CD4-positive, alpha-beta T cell (primary cell): ENCODE measurements at regions of chr4 and their contacts with region 1.

Region 1: DNA sequence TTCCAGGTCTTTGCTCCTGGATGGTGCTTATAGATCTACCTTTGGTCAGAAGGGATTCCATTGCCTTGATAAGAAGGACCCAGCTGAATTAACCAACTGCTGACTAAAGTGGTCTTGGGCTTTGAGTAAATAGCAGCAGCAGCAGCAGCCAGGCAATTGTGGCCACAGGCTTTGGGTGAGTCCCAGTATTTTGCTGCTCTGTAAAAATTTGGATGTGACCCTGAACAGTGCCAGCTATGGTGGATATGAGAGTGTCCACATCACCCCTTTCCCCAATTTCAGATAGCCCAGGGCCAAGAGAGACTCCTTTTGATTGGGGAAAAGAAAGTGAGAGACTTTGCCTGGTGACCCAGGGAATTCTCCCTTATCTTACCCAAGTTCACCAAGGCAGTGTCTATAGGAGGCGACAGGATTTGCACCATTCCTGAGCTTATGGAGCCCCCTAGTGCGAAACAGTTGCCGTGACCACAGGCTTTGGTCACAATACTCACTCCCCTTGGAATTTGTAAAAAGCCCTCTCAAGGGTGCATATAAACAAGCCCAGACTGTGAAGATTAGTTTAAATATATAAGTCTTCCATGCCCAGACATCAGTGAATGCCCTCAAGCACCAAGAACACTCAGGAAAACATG is 518.0 kb downstream of the TMA16 start:
- DNase-seq: peak in 12 of 14 experiments; percentile 2 to 64 (median 14)
- ATAC-seq: peak; percentile 64
- H3K4me3 ChIP-seq: no peak overlapping the region
- H3K4me3 Mint-ChIP-seq: no peak overlapping the region
- H3K27ac ChIP-seq: no peak overlapping the region
- H3K27ac Mint-ChIP-seq: no peak overlapping the region
- H3K4me1 ChIP-seq: no peaks in the 10 kb centered on the region
- H3K4me1 Mint-ChIP-seq: peaks cover 21% of the 10 kb centered on the region
- H3K27me3 ChIP-seq: no peaks in the 10 kb centered on the region
- H3K27me3 Mint-ChIP-seq: no peaks in the 10 kb centered on the region
- CTCF ChIP-seq: peak; percentile 62

Region 2: GRCh38 chr4:162497564-162498167 is 1514.8 kb before region 1 on chr4:
- CTCF ChIA-PET with region 1: no interaction called
- POLR2A ChIA-PET with region 1: no interaction called
- intact Hi-C with region 1: loop called in 1 of 2 experiments (anchors 10 kb)
- DNase-seq: peak in 3 of 14 experiments; percentile 38 to 54 (median 52)
- ATAC-seq: peak; percentile 52
- H3K4me3 ChIP-seq: no peak overlapping the region
- H3K4me3 Mint-ChIP-seq: no peak overlapping the region
- H3K27ac ChIP-seq: no peak overlapping the region
- H3K27ac Mint-ChIP-seq: no peak overlapping the region
- H3K4me1 ChIP-seq: no peaks in the 10 kb centered on the region
- H3K4me1 Mint-ChIP-seq: no peaks in the 10 kb centered on the region
- H3K27me3 ChIP-seq: no peaks in the 10 kb centered on the region
- H3K27me3 Mint-ChIP-seq: peaks cover 10% of the 10 kb centered on the region
- CTCF ChIP-seq: peak; percentile 72

Region 3: GRCh38 chr4:163484906-163485305 is 527.6 kb before region 1 on chr4:
- CTCF ChIA-PET with region 1: no interaction called
- POLR2A ChIA-PET with region 1: no interaction called
- intact Hi-C with region 1: loop called (anchors 2 to 5 kb)
- DNase-seq: peak; percentile 14 to 77 (median 39)
- ATAC-seq: peak; percentile 60
- H3K4me3 ChIP-seq: no peak overlapping the region
- H3K4me3 Mint-ChIP-seq: no peak overlapping the region
- H3K27ac ChIP-seq: no peak overlapping the region
- H3K27ac Mint-ChIP-seq: no peak overlapping the region
- H3K4me1 ChIP-seq: no peaks in the 10 kb centered on the region
- H3K4me1 Mint-ChIP-seq: no peaks in the 10 kb centered on the region
- H3K27me3 ChIP-seq: no peaks in the 10 kb centered on the region
- H3K27me3 Mint-ChIP-seq: peaks cover 11% of the 10 kb centered on the region
- CTCF ChIP-seq: peak; percentile 71

Region 4: DNA sequence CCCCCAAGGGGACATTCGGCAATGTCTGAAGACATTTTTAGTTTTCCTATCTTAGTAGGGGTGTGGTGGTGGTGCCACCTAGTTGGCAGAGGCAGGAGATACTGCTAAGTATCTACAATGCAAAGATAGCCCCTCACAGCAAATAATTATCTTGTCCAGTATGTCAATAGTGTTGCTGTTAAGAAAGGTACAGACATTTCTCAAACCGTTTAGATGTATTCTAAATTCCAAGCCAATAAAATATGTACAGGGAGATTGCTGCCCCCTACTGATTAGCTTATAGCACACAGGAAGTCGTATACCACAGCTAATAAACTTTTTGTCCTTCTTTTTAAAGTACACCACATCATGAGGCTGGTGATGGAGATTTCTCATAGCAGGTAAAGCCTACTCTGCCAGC is 257.5 kb before region 1 on chr4:
- CTCF ChIA-PET with region 1: no interaction called
- POLR2A ChIA-PET with region 1: no interaction called
- intact Hi-C with region 1: loop called (anchors 10 kb)
- DNase-seq: peak in 3 of 14 experiments; percentile 51 to 57 (median 52)
- ATAC-seq: peak; percentile 61
- H3K4me3 ChIP-seq: no peak overlapping the region
- H3K4me3 Mint-ChIP-seq: no peak overlapping the region
- H3K27ac ChIP-seq: no peak overlapping the region
- H3K27ac Mint-ChIP-seq: no peak overlapping the region
- H3K4me1 ChIP-seq: no peaks in the 10 kb centered on the region
- H3K4me1 Mint-ChIP-seq: peaks cover 9% of the 10 kb centered on the region
- H3K27me3 ChIP-seq: no peaks in the 10 kb centered on the region
- H3K27me3 Mint-ChIP-seq: peaks cover 7% of the 10 kb centered on the region
- CTCF ChIP-seq: peak; percentile 62

Region 5: GRCh38 chr4:163764569-163764968 is 247.9 kb before region 1 on chr4:
- CTCF ChIA-PET with region 1: no interaction called
- POLR2A ChIA-PET with region 1: no interaction called
- intact Hi-C with region 1: loop called (anchors 10 kb)
- DNase-seq: no peak
- ATAC-seq: no peak
- H3K4me3 ChIP-seq: no peak overlapping the region
- H3K4me3 Mint-ChIP-seq: no peak overlapping the region
- H3K27ac ChIP-seq: no peak overlapping the region
- H3K27ac Mint-ChIP-seq: no peak overlapping the region
- H3K4me1 ChIP-seq: no peaks in the 10 kb centered on the region
- H3K4me1 Mint-ChIP-seq: no peaks in the 10 kb centered on the region
- H3K27me3 ChIP-seq: peaks cover 0 to 4% of the 10 kb centered on the region in 2 experiments
- H3K27me3 Mint-ChIP-seq: peaks cover 3% of the 10 kb centered on the region
- CTCF ChIP-seq: no peak

Region 6: DNA sequence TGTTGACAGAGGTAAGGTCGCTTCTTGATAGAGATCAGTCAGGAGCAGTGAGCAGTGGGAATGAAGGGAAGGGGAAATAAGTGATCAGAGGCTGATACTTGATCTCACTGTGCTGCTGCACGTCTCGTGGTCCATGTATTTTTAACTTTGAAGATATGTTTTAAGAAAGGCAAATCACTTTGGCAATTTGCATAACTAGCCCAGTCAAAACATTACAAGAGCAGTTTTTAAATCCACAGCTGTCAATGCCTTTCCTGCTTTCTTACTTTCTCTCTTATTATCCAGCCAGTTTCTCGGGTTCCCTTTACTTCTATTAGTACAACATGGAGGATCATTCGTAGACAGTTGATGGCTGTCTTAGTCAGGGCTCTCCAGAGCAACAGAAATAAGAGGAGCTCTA is 45.2 kb before region 1 on chr4:
- CTCF ChIA-PET with region 1: no interaction called
- POLR2A ChIA-PET with region 1: no interaction called
- intact Hi-C with region 1: no loop called
- DNase-seq: no peak
- ATAC-seq: no peak
- H3K4me3 ChIP-seq: no peak overlapping the region
- H3K4me3 Mint-ChIP-seq: no peak overlapping the region
- H3K27ac ChIP-seq: no peak overlapping the region
- H3K27ac Mint-ChIP-seq: no peak overlapping the region
- H3K4me1 ChIP-seq: no peaks in the 10 kb centered on the region
- H3K4me1 Mint-ChIP-seq: no peaks in the 10 kb centered on the region
- H3K27me3 ChIP-seq: no peaks in the 10 kb centered on the region
- H3K27me3 Mint-ChIP-seq: no peaks in the 10 kb centered on the region
- CTCF ChIP-seq: no peak

Region 7: DNA sequence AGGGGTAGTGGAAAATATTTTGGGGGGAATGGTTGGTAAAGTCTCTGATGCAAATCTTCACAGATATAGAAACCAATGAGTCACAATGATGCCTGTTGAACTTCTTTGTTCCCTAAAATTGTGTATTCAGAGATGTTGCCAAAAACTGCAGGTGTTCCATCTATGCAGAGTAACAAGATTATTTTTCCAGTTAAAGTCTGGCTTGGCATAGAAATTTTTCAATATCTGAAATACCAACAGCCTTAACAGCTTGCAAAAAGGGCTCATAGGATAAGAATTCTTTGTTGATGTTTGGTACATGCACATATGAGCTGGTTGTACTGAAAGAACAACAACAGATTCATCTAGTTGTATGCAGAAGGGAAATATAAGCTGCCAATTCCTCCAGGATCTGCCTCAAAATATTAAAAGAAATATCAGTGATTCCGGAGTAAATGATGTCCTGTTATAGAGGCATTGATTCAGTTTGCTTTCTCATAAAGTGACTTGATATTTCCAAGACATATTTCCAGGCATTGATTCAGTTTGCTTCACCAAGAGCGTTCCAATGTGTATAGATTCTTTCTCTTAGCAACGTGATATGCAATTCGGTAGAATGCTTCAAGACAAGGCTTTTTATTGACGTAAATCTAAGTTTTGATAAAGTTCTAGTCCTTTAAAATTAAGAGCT is 46.4 kb after region 1 on chr4:
- CTCF ChIA-PET with region 1: no interaction called
- POLR2A ChIA-PET with region 1: no interaction called
- intact Hi-C with region 1: no loop called
- DNase-seq: no peak
- ATAC-seq: no peak
- H3K4me3 ChIP-seq: no peak overlapping the region
- H3K4me3 Mint-ChIP-seq: no peak overlapping the region
- H3K27ac ChIP-seq: no peak overlapping the region
- H3K27ac Mint-ChIP-seq: no peak overlapping the region
- H3K4me1 ChIP-seq: no peaks in the 10 kb centered on the region
- H3K4me1 Mint-ChIP-seq: no peaks in the 10 kb centered on the region
- H3K27me3 ChIP-seq: no peaks in the 10 kb centered on the region
- H3K27me3 Mint-ChIP-seq: no peaks in the 10 kb centered on the region
- CTCF ChIP-seq: no peak